BJ (cell line): ENCODE measurements at regions of chr12 and their contacts with region 1.

Region 1: DNA sequence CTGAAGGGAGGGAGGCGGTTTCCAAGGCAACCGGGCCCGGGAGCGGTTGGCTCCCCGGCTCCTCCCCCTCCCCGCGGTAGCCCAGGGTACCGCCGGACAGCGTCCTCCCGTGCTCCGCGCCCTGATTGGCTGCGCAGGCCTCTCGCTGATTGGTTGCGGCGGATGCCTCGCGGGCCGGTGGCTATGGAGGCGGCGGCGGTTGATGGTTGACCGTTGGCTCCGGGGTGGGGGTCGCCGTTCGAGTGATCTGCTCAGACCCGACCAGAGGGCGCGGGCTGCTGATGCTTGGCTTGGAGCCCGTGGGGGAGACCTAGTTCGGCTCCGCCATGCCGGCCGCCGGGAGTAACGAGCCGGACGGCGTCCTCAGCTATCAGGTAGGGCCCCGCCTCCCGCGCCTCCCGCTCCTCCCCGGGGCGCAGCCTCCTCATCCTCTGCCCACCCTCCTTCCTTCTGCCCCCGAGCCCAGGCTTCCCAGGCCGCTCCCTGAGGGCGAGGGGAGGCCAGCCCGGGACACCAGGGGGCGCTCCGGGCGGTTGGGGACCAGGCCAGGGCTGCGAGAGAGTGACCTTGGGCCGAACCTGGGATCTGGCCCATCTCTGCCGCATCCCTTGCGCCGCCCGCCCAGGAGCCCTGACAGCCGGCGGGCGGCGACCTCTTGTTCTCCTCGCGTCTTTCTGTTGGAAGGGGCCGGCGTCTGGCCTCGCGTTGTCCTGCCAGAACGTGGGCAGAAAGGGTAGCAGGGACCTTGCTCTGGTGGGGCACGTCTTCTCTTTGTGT is at the start of gene SLC4A8:
- DNase-seq: no peak
- H3K4me3 ChIP-seq: peak within 1 kb of the TSS; percentile 77
- H3K27me3 ChIP-seq: no peaks in the 10 kb centered on the region
- CTCF ChIP-seq: peak; percentile 96
- polyA plus RNA-seq, gene SLC4A8: 4.9 and 7.3 TPM in 2 replicates

Region 2: GRCh38 chr12:51392556-51393237 is 32.2 kb before region 1 on chr12:
- CTCF ChIA-PET with region 1: interaction called, 14 read pairs
- POLR2A ChIA-PET with region 1: no interaction called
- DNase-seq: no peak
- H3K4me3 ChIP-seq: no peak overlapping the region
- H3K27me3 ChIP-seq: no peaks in the 10 kb centered on the region
- CTCF ChIP-seq: 0 out of 2 replicates have a peak, but pooled peaks have one; percentile 4

Region 3: DNA sequence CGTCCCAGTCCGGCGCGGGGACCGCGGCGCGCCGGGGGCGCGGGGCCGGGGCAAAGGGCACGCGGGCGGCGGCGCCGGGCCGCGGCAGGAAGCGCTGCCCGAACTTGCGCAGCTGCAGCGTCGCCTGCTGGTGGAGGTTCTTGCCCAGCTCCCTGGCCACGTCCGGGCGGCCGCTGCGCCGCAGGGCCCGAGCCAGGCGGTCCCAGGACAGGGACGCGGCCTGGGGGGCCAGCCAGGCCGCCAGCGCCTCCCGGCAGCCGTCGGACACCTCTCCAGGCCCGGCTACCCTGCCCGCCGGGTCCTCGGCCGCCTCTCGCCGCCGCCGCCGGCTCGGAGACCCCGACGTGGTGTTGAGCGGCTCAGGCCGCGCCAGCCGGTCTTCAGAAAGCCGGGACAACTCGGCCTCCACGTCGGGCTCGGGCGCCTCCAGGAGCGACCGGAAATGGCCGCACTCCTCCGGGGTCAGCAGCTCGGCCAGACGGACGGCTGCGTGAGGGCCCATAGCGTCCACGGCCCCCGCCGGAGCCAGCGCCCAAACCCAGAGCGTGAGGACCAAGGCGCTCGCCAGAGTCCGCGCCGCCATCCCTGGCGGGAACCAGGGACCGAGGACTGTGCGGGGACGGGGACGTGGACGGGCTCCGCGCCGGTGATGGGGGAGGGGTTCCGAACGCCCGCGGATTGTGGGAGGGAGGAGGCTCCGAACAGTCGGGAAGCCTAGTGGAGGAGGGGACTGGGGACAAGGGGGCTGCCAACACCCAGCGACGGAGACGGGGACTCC is 389.6 kb after region 1 on chr12:
- CTCF ChIA-PET with region 1: interaction called, 39 read pairs
- POLR2A ChIA-PET with region 1: no interaction called
- DNase-seq: no peak
- H3K4me3 ChIP-seq: peak overlapping the region; percentile 46
- H3K27me3 ChIP-seq: no peaks in the 10 kb centered on the region
- CTCF ChIP-seq: peak; percentile 58

Region 4: GRCh38 chr12:51832354-51833107 is 407.7 kb after region 1 on chr12:
- CTCF ChIA-PET with region 1: interaction called, 10 read pairs
- POLR2A ChIA-PET with region 1: no interaction called
- DNase-seq: no peak
- H3K4me3 ChIP-seq: no peak overlapping the region
- H3K27me3 ChIP-seq: peaks cover 25% of the 10 kb centered on the region
- CTCF ChIP-seq: no peak

Region 5: DNA sequence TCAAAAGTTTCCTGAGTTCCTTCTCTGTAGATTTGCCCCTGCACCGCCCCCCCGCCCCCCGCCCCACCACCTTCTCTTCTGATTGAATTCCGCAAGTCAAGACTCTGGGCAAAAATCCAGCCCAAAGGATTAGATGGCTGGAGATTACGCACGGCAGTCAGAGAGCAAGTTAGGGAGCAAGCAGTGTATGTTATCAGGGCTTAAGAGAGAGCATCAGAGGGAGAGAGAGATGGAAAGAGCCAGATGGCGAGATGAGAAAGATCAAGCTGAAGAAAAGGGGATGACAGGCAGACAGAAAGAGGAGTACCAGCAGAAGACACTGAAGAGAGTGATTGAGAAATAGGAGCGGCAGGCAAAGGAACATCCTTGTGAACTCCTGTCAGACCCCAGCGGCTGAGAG is 449.2 kb after region 1 on chr12:
- CTCF ChIA-PET with region 1: interaction called, 63 read pairs
- POLR2A ChIA-PET with region 1: no interaction called
- DNase-seq: no peak
- H3K4me3 ChIP-seq: no peak overlapping the region
- H3K27me3 ChIP-seq: no peaks in the 10 kb centered on the region; the same call in 1 of the 2 replicates
- CTCF ChIP-seq: no peak